Motor neuron (in vitro differentiated cells): ENCODE measurements at regions of chr1 and their contacts with region 1.

Region 1: GRCh38 chr1:17236779-17237560 is 11.9 kb upstream of the PADI3 start:
- ATAC-seq: peak; percentile 78 to 90 (median 87)
- H3K4me3 ChIP-seq: no peak overlapping the region
- H3K27ac ChIP-seq: no peak overlapping the region
- H3K4me1 ChIP-seq: peaks cover 3 to 4% of the 10 kb centered on the region in 2 donors

Region 2: GRCh38 chr1:17125756-17126237 is 111.2 kb before region 1 on chr1:
- in situ Hi-C with region 1: loop called (anchors 5 to 10 kb)
- ATAC-seq: peak; percentile 69 to 97 (median 77)
- H3K4me3 ChIP-seq: no peak overlapping the region
- H3K27ac ChIP-seq: no peak overlapping the region
- H3K4me1 ChIP-seq: peaks cover 17 to 28% of the 10 kb centered on the region in 2 donors

Region 3: GRCh38 chr1:17135530-17135929 is 101.4 kb before region 1 on chr1:
- in situ Hi-C with region 1: loop called in 1 of 9 experiments (anchors 10 kb)
- ATAC-seq: no peak
- H3K4me3 ChIP-seq: no peak overlapping the region
- H3K27ac ChIP-seq: no peak overlapping the region
- H3K4me1 ChIP-seq: no peaks in the 10 kb centered on the region

Region 4: DNA sequence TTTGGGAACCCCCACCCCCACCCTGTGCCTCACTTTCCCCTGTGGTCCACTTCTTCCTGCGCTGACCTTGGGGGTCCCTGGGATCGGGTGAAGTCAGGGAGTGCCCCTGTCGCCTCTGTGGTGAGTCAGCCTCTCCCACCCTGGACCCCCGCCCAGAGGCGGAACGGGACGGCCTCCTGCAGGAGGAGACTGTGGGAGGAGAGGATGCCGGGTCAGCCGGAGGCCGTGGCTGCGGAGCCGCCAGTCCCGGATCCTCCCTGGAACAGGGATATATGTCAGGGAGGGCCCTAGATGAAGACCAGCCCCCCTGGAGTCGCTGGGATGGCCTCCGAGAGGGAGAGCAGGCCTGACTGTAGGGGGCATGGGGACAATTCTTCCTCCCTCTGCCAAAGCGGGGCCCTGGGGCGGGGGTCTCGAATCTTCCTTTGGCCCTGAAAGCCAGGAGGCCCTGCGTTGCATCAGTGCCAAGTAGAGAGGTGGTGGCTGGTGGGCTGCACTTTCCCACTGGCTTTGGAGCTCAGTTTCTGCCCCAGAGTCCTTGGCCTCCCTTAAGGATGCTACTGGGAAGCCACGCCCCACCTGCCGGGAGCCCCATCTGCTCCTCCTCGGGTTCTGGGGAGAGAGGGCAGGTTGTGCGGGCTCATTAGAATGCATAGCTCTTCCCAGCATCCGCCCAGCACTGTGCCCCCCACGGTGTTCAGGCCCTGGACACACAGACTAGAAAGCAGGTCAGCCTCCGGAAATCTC is 303.5 kb after region 1 on chr1:
- in situ Hi-C with region 1: no loop called
- ATAC-seq: peak; percentile 29 to 67 (median 51)
- H3K4me3 ChIP-seq: peak overlapping the region; percentile 66 to 93 (median 71)
- H3K27ac ChIP-seq: peak overlapping the region; percentile 85
- H3K4me1 ChIP-seq: peaks cover 31 to 34% of the 10 kb centered on the region in 2 donors